BJ (cell line): ENCODE measurements at regions of chr9 and their contacts with region 1.

Region 1: DNA sequence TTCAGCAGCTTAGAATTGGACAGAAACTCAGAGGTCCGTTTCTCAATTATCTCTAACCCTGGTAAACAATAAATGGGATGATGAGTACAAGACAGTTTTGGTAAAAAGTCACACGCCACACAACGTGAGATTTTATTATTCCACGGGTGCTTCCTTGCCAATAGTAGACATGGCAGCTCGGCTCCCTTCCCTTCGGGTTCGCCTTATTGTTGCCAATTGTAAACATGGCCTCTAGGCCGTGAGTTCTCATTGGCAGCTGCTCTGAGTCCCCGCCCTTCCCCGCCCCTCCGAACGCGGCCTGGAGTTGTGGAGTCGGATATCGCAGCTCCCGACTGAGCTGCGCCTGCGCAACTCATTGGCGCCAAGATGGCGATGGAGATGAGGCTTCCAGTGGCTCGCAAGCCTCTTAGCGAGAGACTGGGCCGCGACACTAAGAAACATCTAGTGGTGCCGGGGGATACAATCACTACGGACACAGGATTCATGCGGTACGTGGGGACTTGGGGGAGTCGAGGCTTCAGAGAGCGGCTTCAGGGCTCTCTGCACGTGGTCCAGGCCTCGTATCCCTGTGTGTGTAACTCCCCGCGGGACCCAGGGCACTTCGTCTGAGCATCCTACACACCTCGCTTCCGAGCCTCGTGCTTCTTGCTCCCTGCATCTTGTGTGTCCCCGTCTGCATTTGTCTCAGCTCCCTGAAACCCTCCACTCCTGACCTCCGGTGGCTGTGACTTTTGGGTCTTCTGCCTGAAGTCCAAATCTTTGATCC is at the start of gene EXOSC2:
- DNase-seq: peak; percentile 94
- H3K4me3 ChIP-seq: peak within 1 kb of the TSS; percentile 87
- H3K27me3 ChIP-seq: no peaks in the 10 kb centered on the region
- CTCF ChIP-seq: no peak
- polyA plus RNA-seq, gene EXOSC2: 19.8 and 20.3 TPM in 2 replicates

Region 2: DNA sequence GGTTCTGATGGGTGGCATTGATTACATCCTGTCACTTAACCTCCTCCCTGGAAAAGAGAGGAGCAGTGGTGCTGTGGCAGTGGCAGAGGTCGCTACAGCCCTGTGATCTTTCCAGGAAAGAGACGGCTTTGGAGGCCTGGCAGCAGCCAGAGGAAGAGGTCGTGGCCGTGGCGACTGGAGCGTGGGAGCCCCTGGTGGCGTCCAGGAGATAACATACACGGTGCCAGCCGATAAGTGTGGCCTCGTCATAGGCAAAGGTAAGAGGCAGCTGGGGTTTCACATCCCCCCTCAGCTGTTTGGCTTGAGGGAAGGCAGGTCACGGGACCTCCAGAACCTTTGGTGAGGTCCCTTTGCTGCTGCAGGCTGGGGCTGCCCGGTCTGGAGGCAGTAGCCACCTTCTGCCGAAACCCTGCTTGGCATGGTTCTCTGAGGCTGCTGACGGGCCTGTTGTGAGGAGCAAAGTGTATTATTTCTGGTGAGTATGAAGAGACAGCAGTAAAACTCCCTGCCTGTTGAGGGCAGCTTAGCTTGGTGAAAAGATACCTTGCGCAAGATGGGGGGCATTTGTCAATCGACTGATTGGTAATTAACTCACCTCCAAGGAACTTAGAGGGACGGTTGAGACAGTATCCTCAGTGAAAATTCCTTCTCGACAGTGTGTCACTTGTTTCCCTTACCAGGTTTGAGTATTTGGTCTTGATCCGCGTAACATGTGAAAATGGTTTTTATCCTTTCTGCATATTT is 67.2 kb before region 1 on chr9:
- CTCF ChIA-PET with region 1: no interaction called
- POLR2A ChIA-PET with region 1: no interaction called
- DNase-seq: no peak
- H3K4me3 ChIP-seq: no peak overlapping the region
- H3K27me3 ChIP-seq: no peaks in the 10 kb centered on the region
- CTCF ChIP-seq: no peak

Region 3: GRCh38 chr9:130642926-130643325 is 50.7 kb before region 1 on chr9:
- CTCF ChIA-PET with region 1: no interaction called
- POLR2A ChIA-PET with region 1: no interaction called
- DNase-seq: no peak
- H3K4me3 ChIP-seq: no peak overlapping the region
- H3K27me3 ChIP-seq: no peaks in the 10 kb centered on the region
- CTCF ChIP-seq: no peak

Region 4: GRCh38 chr9:130682490-130683121 is 11.0 kb before region 1 on chr9:
- CTCF ChIA-PET with region 1: interaction called, 17 read pairs
- POLR2A ChIA-PET with region 1: no interaction called
- DNase-seq: no peak
- H3K4me3 ChIP-seq: no peak overlapping the region
- H3K27me3 ChIP-seq: peaks cover 9% of the 10 kb centered on the region
- CTCF ChIP-seq: peak; percentile 86

Region 5: DNA sequence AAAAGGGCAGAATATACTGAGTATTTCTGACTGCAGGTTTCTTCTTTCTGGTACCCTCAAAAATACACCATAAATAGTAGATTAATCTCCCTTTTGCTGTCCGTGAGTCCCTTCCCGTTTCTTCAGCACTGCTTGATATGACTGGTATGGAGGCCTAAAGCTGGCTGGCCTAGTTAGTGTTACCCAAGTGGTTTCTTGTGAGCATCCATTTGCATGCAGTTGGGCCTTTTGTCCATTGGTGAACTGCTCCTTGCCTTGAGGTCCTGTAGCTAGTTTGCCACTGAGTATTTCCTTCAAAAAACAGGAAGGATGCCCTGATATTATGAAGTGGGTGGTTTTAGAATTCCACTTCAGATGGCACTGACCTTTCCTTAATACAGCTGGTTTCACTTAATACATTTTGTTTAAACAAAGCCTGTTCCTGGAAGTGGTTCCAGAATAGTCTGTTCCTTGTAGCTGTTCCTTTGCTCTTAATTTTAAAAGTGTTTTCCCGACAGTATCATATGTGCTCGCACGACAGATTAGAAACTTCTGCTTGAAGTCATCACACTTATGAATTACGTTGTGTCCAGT is 101.4 kb after region 1 on chr9:
- CTCF ChIA-PET with region 1: no interaction called
- POLR2A ChIA-PET with region 1: no interaction called
- DNase-seq: peak; percentile 9
- H3K4me3 ChIP-seq: no peak overlapping the region
- H3K27me3 ChIP-seq: no peaks in the 10 kb centered on the region
- CTCF ChIP-seq: no peak